Activated CD8-positive, alpha-beta memory T cell treated with anti-CD3 and anti-CD28 coated beads, Interleukin-2, amount 10 ng/mL, durations not matched to agents 7 days and 5 days (primary cell): ENCODE measurements at regions of chr1 and their contacts with region 1.

Region 1: DNA sequence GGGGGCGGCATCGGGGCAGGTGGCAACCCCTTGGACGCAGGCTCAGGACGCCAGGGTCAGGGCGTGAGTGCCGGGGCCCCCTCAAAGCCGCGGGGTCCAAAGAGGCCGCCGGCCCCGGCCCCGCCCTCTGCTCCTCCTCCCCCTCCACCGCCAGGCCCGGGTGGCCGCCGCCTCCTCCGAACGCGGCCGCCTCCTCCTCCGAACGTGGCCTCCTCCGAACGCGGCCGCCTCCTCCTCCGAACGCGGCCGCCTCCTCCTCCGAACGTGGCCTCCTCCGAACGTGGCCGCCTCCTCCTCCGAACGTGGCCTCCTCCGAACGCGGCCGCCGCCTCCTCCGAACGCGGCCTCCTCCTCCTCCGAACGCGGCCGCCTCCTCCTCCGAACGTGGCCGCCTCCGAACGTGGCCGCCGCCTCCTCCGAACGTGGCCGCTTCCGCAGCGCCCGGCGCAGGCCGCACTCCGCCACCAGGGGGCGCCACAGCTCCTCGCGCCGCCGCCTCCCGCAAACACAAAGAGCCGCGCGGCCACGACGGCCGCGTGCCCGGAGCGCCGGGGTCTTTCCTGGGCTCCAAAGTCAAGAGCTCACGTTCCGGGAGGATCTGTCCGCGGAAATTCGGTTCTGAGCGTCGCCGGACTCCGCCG is 19.3 kb upstream of the SAMD11 start:
- DNase-seq: peak; percentile 87
- ATAC-seq: peak; percentile 92
- H3K4me3 Mint-ChIP-seq: peak overlapping the region; percentile 56
- H3K27ac Mint-ChIP-seq: no peak overlapping the region
- H3K4me1 Mint-ChIP-seq: peaks cover 10% of the 10 kb centered on the region
- H3K27me3 Mint-ChIP-seq: peaks cover 50% of the 10 kb centered on the region

Region 2: GRCh38 chr1:869499-870244 is 34.8 kb before region 1 on chr1:
- CTCF ChIA-PET with region 1: interaction called, 11 read pairs
- DNase-seq: peak; percentile 81
- ATAC-seq: peak; percentile 98
- H3K4me3 Mint-ChIP-seq: no peak overlapping the region
- H3K27ac Mint-ChIP-seq: no peak overlapping the region
- H3K4me1 Mint-ChIP-seq: peaks cover 12% of the 10 kb centered on the region
- H3K27me3 Mint-ChIP-seq: peaks cover 42% of the 10 kb centered on the region

Region 3: DNA sequence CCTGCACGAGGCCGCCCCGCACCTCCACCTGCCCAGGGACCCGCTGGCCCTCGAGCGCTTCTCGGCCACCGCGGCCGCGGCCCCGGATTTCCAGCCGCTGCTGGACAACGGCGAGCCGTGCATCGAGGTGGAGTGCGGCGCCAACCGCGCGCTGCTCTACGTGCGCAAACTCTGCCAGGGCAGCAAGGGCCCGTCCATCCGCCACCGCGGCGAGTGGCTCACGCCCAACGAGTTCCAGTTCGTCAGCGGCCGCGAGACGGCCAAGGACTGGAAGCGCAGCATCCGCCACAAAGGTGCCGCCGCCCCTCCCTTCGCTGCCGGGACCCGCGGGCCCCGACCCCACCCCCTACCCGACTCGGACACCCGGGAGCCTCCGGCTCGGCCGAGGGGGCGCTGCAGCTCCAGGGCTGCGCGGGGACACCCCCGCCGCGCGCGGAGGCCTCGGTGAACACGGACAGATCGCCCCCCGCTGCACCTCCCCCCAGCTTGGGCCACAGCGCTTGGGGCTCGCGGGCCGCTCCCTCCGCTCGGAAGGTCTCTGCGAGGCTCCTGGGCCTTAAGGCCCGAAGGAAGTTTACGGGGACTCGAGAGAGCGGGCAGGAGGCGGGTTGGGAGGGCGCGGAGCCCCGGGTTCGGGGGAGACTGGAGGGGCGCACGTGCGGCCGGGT is 20.4 kb after region 1 on chr1:
- CTCF ChIA-PET with region 1: no interaction called
- DNase-seq: no peak
- ATAC-seq: no peak
- H3K4me3 Mint-ChIP-seq: no peak overlapping the region
- H3K27ac Mint-ChIP-seq: no peak overlapping the region
- H3K4me1 Mint-ChIP-seq: peaks cover 13% of the 10 kb centered on the region
- H3K27me3 Mint-ChIP-seq: peaks cover 66% of the 10 kb centered on the region

Region 4: DNA sequence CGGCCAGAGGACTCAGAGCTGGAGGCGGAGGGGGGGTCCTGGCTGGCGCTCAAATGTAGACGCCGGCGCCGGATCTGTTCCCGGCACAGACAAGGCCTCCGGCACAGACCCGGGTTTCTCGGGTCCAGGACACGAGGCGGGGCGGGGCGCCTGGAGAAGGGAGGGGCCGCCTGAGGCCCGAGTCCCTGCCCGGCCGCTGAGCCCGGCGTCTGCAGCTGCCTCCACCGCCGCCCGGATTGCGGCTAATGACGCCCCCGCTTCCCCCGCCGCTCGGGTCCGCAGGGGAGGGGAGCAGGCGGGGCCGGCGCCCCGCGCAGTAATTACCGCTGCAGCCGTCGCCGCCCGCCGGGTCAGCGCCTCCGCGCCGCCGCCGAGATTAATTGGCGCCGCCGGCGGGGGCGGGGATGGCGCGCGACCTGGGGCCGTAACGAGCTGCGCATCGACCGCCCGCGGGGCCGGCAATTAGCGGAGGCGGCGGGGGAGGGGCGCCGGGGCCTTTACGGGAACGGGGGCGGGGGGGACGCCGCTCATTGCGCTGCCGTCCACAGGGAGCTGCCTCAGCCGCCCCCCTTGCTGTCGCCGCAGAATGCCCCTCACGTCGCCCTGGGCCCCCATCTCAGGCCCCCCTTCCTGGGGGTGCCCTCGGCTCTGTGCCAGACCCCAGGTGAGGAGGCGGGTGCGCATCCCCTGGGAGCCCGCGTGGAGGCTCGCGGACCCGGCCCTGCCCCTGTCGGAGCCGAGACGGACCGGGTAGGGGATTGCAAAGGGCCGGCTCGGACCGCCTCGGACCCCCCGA is 37.4 kb after region 1 on chr1:
- CTCF ChIA-PET with region 1: interaction called, 34 read pairs
- DNase-seq: peak; percentile 59
- ATAC-seq: peak; percentile 28
- H3K4me3 Mint-ChIP-seq: peak overlapping the region; percentile 51
- H3K27ac Mint-ChIP-seq: no peak overlapping the region
- H3K4me1 Mint-ChIP-seq: peaks cover 15% of the 10 kb centered on the region
- H3K27me3 Mint-ChIP-seq: peaks cover 42% of the 10 kb centered on the region

Region 5: GRCh38 chr1:958823-959729 is 54.6 kb after region 1 on chr1 and contains the start of gene NOC2L:
- CTCF ChIA-PET with region 1: interaction called, 11 read pairs
- DNase-seq: peak; percentile 95
- ATAC-seq: peak; percentile 80
- H3K4me3 Mint-ChIP-seq: peak within 1 kb of the TSS; percentile 81
- H3K27ac Mint-ChIP-seq: peak within 1 kb of the TSS; percentile 67
- H3K4me1 Mint-ChIP-seq: peaks cover 16% of the 10 kb centered on the region
- H3K27me3 Mint-ChIP-seq: no peaks in the 10 kb centered on the region
- total RNA-seq, gene NOC2L: 68.9 to 103 TPM

Region 6: GRCh38 chr1:975896-976683 is 71.7 kb after region 1 on chr1:
- CTCF ChIA-PET with region 1: interaction called, 10 read pairs
- DNase-seq: no peak
- ATAC-seq: peak; percentile 68
- H3K4me3 Mint-ChIP-seq: no peak overlapping the region
- H3K27ac Mint-ChIP-seq: no peak overlapping the region
- H3K4me1 Mint-ChIP-seq: peaks cover 6% of the 10 kb centered on the region
- H3K27me3 Mint-ChIP-seq: peaks cover 4% of the 10 kb centered on the region

Region 7: GRCh38 chr1:1144122-1144842 is 239.9 kb after region 1 on chr1:
- CTCF ChIA-PET with region 1: no interaction called
- DNase-seq: peak; percentile 68
- ATAC-seq: peak; percentile 69
- H3K4me3 Mint-ChIP-seq: no peak overlapping the region
- H3K27ac Mint-ChIP-seq: peak overlapping the region; percentile 83
- H3K4me1 Mint-ChIP-seq: peaks cover 11% of the 10 kb centered on the region
- H3K27me3 Mint-ChIP-seq: no peaks in the 10 kb centered on the region